Thyroid gland (tissue), 4 donors: ENCODE measurements at regions of chr9 and their contacts with region 1.

Region 1: GRCh38 chr9:128881901-128882681 is at the starts of genes KYAT1 and LRRC8A:
- DNase-seq: peak; percentile 98 to 99
- H3K4me3 ChIP-seq: peak within 1 kb of the TSS; percentile 48 to 83 (median 59)
- H3K27ac ChIP-seq: peak within 1 kb of the TSS; percentile 93 to 99 (median 95)
- H3K4me1 ChIP-seq: peaks cover 19 to 45% of the 10 kb centered on the region in 2 donors
- H3K27me3 ChIP-seq: no peaks in the 10 kb centered on the region
- CTCF ChIP-seq: peak in 2 of 6 experiments; percentile 17 to 40
- POLR2A ChIP-seq: peak; percentile 44 to 82
- total RNA-seq, gene KYAT1: 5.8 to 12.6 (median 12.3) TPM
- total RNA-seq, gene LRRC8A: 56.3 to 65.6 (median 61.5) TPM

Region 2: DNA sequence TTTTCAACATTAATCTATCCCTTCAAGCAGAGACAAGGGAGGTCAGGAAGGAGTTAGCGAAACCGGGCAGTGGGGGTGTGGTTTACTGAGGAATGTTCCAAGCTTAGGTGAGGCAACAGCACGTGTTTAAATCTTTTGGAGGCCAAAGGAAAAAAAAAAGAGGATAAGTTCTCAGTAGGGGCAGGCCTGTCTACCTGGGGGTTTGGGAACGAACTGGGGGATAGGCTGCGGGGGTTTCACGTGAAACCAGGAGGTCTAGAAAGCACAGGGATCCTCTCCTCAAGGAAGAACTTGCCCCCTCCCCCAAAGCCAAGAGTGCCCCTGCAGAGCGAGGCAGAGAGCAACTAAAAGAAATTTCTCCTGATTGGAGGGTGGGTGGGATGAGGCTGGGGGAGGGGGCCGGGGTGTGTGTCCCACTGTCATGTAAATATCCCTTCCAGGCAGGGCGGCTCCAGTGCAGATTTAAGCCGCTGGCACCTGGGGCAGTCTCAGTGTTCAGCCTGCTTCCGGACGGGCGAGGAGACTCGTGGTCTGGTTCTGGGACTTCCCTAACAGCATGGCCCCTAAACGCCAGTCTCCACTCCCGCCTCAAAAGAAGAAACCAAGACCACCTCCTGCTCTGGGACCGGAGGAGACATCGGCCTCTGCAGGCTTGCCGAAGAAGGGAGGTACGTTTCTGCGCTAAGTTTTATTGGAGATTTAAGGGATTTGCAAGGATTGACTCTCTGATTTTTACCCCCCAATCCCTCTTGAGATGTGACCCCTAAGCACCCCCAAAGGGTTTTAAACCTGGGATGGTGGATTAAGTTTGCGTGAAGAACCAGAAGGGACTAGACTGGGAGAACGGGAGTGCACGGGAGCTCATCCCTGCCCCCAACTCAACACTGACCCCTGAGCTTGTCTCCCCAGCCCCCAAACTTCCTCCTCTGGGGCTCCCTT is 198.5 kb before region 1 on chr9:
- intact Hi-C with region 1: no loop called
- DNase-seq: peak; percentile 84 to 86
- H3K4me3 ChIP-seq: peak overlapping the region; percentile 27 to 51 (median 35)
- H3K27ac ChIP-seq: peak overlapping the region; percentile 79 to 99 (median 96)
- H3K4me1 ChIP-seq: peaks cover 27 to 43% of the 10 kb centered on the region in 2 donors
- H3K27me3 ChIP-seq: no peaks in the 10 kb centered on the region
- CTCF ChIP-seq: no peak
- POLR2A ChIP-seq: peak in 1 of 2 donors; percentile 48

Region 3: GRCh38 chr9:128714586-128715435 is 167.3 kb before region 1 on chr9:
- intact Hi-C with region 1: no loop called
- DNase-seq: no peak
- H3K4me3 ChIP-seq: no peak overlapping the region
- H3K27ac ChIP-seq: no peak overlapping the region
- H3K4me1 ChIP-seq: no peaks in the 10 kb centered on the region
- H3K27me3 ChIP-seq: no peaks in the 10 kb centered on the region
- CTCF ChIP-seq: no peak
- POLR2A ChIP-seq: no peak

Region 4: GRCh38 chr9:128786681-128787601 is 95.2 kb before region 1 on chr9 and contains the start of gene TBC1D13:
- intact Hi-C with region 1: no loop called
- DNase-seq: peak; percentile 88 to 92
- H3K4me3 ChIP-seq: peak within 1 kb of the TSS; percentile 59 to 97 (median 92)
- H3K27ac ChIP-seq: peak within 1 kb of the TSS; percentile 63 to 86 (median 64)
- H3K4me1 ChIP-seq: peaks cover 8 to 12% of the 10 kb centered on the region in 2 donors
- H3K27me3 ChIP-seq: no peaks in the 10 kb centered on the region
- CTCF ChIP-seq: peak in 1 of 6 experiments; percentile 19
- POLR2A ChIP-seq: peak in 1 of 2 donors; percentile 58
- total RNA-seq, gene TBC1D13: 18.6 to 32.1 (median 27.6) TPM

Region 5: DNA sequence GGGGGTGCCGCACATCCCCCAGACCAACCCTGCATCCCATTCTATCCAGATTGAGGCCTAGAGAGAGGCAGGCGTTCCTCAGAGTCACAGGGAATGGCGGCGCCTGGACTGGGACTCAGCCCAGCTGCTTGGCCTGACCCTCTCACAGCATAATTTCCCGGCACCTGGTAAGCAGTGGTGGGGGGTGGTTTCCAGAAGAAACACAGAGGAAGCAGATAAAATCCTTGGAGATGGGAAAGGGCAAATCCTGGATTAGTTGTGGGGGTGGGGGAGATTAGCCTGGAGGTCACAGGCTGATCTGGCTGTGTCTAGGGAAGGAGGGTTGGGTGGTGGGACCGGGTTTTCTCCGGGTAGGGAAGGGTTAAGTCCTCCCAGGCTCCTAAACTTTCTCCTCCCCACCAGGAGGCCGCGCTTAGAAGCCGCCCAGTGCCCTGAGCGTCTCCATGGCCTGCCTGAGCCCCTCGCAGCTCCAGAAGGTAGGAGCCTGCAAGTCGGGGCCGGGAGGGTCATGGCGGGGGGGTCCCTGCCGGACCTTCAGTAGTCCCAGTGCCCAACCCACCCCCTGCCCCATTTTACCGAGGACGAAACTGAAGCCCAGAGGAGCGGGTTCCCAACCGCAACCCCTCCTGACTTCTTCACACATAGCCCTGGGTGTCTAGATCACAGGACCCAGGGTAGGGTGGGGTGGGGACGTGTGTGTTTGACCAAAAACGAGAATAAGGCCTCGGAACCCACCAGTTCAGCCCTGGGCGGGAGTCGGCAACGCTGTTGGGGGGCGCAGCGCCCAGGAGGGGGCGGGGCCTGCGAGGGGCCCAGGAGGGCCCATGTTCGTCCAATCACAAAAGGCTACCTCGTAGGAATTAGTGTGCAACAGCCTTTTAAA is 40.0 kb after region 1 on chr9:
- intact Hi-C with region 1: loop called (anchors 5 kb)
- DNase-seq: peak; percentile 71 to 75
- H3K4me3 ChIP-seq: peak overlapping the region in 2 of 3 donors; percentile 25 to 42
- H3K27ac ChIP-seq: peak overlapping the region; percentile 80 to 100 (median 92)
- H3K4me1 ChIP-seq: peaks cover 44 to 59% of the 10 kb centered on the region in 2 donors
- H3K27me3 ChIP-seq: no peaks in the 10 kb centered on the region
- CTCF ChIP-seq: no peak
- POLR2A ChIP-seq: peak in 1 of 2 donors; percentile 70